Naive thymus-derived CD4-positive, alpha-beta T cell (primary cell): ENCODE measurements at regions of chr4 and their contacts with region 1.

Region 1: GRCh38 chr4:37891260-37892159 is 626 bp downstream of the TBC1D1 start:
- DNase-seq: peak; percentile 37 to 70 (median 58)
- ATAC-seq: peak; percentile 68
- H3K4me3 ChIP-seq: peak overlapping the region; percentile 51
- H3K4me3 Mint-ChIP-seq: peak overlapping the region; percentile 88 to 100 (median 96)
- H3K27ac ChIP-seq: peak overlapping the region; percentile 69
- H3K27ac Mint-ChIP-seq: peak overlapping the region; percentile 86 to 97 (median 92)
- H3K4me1 ChIP-seq: peaks cover 10 to 25% of the 10 kb centered on the region in 2 donors
- H3K4me1 Mint-ChIP-seq: peaks cover 28 to 66% (median 55%) of the 10 kb centered on the region in 7 donors
- H3K27me3 ChIP-seq: no peaks in the 10 kb centered on the region
- H3K27me3 Mint-ChIP-seq: peaks cover 0 to 5% (median 0%) of the 10 kb centered on the region in 5 donors

Region 2: DNA sequence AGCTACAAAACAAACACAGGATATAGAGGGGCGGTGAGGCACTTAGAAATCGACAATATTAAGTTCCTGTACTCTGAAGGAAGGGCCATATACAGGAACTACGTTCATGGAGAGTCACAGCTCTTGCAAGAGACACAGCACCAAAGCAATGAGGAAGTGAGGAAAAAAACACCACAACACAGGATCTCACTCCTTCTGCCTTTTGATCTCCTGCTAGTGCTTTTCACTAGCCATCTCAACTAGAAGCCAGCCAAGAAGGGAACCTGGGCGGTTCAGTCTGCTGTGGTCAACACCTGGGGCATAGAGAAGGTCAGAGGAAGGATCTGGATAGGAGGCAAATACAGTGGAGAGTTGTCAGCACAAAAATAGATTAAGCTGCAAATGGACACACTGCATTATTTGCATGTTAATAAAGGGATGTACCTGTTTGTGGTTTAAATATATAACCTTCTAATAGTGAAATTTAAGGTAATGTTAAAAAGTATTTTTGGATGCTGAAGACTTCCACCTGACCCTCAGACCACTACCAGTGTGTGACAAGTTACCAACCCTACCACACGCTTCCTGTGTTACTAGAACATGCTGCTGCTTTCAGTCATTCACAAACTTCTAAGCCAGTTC is 1505.4 kb before region 1 on chr4:
- CTCF ChIA-PET with region 1: no interaction called
- POLR2A ChIA-PET with region 1: no interaction called
- intact Hi-C with region 1: loop called in 1 of 2 experiments (anchors 5 kb)
- DNase-seq: peak; percentile 8 to 89 (median 82)
- ATAC-seq: peak; percentile 99
- H3K4me3 ChIP-seq: peak overlapping the region; percentile 29
- H3K4me3 Mint-ChIP-seq: peak overlapping the region; percentile 46 to 84 (median 70)
- H3K27ac ChIP-seq: peak overlapping the region; percentile 70
- H3K27ac Mint-ChIP-seq: peak overlapping the region; percentile 92 to 99 (median 94)
- H3K4me1 ChIP-seq: peaks cover 22% of the 10 kb centered on the region in 2 donors
- H3K4me1 Mint-ChIP-seq: peaks cover 19 to 51% (median 40%) of the 10 kb centered on the region in 7 donors
- H3K27me3 ChIP-seq: no peaks in the 10 kb centered on the region
- H3K27me3 Mint-ChIP-seq: peaks cover 0 to 11% (median 0%) of the 10 kb centered on the region in 5 donors

Region 3: DNA sequence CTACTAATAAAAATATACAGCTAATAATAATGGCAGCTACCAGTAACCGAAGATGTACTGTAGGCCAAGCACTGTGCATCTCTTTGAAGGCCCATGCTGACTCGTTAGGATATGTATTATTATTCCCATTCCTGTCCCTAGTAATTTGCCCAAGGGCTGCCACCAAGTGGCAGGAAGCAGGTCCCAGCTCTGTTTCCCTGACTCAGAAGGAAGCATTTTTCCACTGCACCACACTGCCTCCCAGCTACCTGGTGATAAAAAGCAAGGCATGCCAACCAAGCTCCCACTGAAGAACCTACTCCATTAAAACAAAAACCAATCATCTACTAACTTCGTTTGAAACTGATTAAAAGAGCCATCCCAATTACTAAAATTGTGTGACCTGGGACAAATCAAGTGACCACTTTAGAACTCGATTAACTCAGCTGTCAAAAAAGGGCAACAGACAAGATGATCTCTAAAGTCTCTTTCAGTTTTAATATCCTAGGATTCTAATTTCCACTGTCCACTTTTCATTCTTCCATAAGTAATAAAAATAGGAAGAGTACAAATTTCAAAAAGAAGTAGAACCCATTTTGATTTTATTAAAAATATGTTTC is 89.3 kb before region 1 on chr4:
- CTCF ChIA-PET with region 1: interaction called, 3 read pairs
- POLR2A ChIA-PET with region 1: no interaction called
- intact Hi-C with region 1: loop called in 1 of 2 experiments (anchors 1 kb)
- DNase-seq: no peak
- ATAC-seq: no peak
- H3K4me3 ChIP-seq: no peak overlapping the region
- H3K4me3 Mint-ChIP-seq: no peak overlapping the region
- H3K27ac ChIP-seq: no peak overlapping the region
- H3K27ac Mint-ChIP-seq: no peak overlapping the region
- H3K4me1 ChIP-seq: no peaks in the 10 kb centered on the region
- H3K4me1 Mint-ChIP-seq: peaks cover 0 to 2% (median 0%) of the 10 kb centered on the region in 7 donors
- H3K27me3 ChIP-seq: no peaks in the 10 kb centered on the region
- H3K27me3 Mint-ChIP-seq: peaks cover 0 to 20% (median 0%) of the 10 kb centered on the region in 5 donors

Region 4: DNA sequence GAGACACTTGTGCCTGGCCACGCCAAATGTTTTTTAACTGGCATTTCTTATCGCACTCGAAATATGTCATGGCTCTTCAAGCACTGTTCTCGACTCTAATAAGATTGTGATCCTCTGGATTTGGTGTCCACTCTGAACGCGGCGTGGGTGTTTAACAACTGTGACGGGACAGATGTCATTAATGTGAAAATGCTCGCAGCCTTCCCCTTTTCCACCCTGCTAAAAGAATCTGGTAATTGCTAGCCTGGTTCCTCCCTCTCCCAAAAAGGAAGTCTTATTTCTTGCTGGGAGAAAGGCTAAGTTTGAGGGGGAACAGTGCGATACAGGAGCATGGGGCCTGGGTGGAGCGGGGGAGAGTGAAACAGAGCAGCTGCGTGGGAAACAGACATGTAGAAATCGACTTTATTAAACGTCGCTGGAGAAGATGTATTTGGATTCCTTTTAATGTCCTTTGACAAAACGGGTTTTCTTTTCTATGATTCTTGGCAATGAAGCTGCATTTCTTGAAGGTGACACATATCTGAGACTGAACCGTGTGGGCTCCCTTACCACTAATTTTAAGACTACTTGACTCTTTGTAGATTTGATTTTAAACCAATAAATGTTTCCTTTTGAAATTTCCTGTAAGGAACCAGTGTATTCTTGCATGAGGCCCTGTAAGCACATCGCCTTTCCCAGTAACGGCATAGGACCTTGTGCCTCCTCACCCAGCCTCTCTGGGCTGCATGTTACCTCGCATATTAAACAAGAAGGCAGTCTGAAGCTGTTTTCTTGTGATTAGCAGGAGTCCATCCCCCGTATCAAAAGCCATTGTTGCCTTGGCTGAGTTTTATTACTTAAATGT is 17.2 kb after region 1 on chr4:
- CTCF ChIA-PET with region 1: no interaction called
- POLR2A ChIA-PET with region 1: interaction called, 3 read pairs
- intact Hi-C with region 1: loop called in 1 of 2 experiments (anchors 1 kb)
- DNase-seq: no peak
- ATAC-seq: no peak
- H3K4me3 ChIP-seq: no peak overlapping the region
- H3K4me3 Mint-ChIP-seq: no peak overlapping the region
- H3K27ac ChIP-seq: no peak overlapping the region
- H3K27ac Mint-ChIP-seq: no peak overlapping the region
- H3K4me1 ChIP-seq: peaks cover 0 to 5% of the 10 kb centered on the region in 2 donors
- H3K4me1 Mint-ChIP-seq: peaks cover 6 to 80% (median 53%) of the 10 kb centered on the region in 7 donors
- H3K27me3 ChIP-seq: no peaks in the 10 kb centered on the region
- H3K27me3 Mint-ChIP-seq: no peaks in the 10 kb centered on the region

Region 5: DNA sequence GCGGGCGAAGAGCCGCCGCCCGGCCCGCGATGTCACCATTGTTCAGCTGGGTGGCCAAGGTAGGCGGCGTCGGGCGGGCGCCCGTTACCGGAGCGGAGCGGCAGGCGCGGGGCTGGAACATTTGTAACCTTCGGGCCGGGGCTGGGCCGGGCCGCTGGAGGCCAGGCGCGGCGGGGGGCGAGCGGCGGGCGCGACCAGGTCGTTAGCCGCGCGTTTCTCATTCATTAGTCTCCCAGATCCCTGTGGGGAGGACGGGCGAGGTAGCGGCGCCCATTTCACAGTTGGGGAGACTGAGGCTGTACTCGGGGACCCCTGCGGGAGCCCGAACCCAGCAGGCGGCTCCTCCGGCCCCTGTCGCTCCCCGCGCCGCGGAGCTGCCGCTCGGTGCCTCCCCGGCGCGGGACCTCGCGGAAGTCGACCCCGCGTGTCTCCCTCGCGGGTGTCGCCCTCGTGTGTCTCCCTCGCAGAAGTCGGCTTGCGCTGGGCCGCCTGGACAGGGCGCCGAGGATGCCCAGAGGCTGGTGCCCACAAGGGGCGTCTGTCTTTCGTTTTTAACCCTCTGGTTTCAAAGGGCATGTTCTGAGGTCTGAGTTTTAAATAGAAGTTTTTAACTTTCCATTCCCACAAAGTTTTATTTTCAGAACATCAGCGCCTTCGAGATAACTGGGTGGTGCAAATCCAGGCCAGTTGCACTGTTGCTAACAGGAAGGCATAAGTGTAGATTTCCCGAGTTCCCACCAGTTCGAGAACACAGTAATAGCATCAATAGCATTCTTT is 86.1 kb after region 1 on chr4:
- CTCF ChIA-PET with region 1: interaction called, 4 read pairs
- POLR2A ChIA-PET with region 1: interaction called, 4 read pairs
- intact Hi-C with region 1: loop called (anchors 1 kb)
- DNase-seq: peak; percentile 56 to 75 (median 70)
- ATAC-seq: peak; percentile 87
- H3K4me3 ChIP-seq: peak overlapping the region; percentile 69
- H3K4me3 Mint-ChIP-seq: peak overlapping the region; percentile 74 to 91 (median 84)
- H3K27ac ChIP-seq: peak overlapping the region; percentile 85
- H3K27ac Mint-ChIP-seq: peak overlapping the region; percentile 51 to 90 (median 78)
- H3K4me1 ChIP-seq: peaks cover 9 to 13% of the 10 kb centered on the region in 2 donors
- H3K4me1 Mint-ChIP-seq: peaks cover 14 to 40% (median 34%) of the 10 kb centered on the region in 7 donors
- H3K27me3 ChIP-seq: no peaks in the 10 kb centered on the region
- H3K27me3 Mint-ChIP-seq: no peaks in the 10 kb centered on the region

Region 6: DNA sequence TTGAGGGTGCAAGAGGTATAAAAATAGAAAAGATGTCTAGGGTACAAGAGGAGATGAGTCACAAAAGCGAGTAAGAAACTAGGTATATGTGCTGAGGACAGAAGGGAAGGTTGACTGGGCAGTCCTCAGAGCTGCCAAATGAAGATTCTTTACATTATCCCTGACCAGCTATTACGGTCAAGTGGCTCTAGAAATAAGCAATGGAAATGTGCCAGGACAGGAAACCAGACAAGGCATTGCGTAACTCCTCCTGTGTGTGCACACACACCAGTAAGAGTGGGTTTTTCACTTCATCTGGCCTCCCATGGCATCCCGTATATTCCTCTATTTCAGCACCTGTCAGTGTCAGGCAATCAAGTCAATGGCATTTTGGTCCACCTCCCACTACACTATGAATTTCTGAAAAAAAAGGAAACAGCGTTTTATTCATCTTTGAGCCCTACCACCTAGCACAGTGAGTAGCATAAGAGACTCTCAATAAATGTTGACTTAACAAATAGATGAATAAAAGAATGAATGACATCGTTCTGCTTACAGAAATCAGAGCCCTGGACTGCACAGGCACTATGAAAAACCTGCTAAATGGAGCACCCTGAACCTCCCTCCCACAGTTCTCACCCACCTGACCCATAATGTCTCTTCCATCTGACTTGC is 709.9 kb after region 1 on chr4:
- CTCF ChIA-PET with region 1: no interaction called
- POLR2A ChIA-PET with region 1: no interaction called
- intact Hi-C with region 1: no loop called
- DNase-seq: no peak
- ATAC-seq: no peak
- H3K4me3 ChIP-seq: no peak overlapping the region
- H3K4me3 Mint-ChIP-seq: no peak overlapping the region
- H3K27ac ChIP-seq: no peak overlapping the region
- H3K27ac Mint-ChIP-seq: peak overlapping the region in 4 of 9 donors; percentile 18 to 27 (median 20)
- H3K4me1 ChIP-seq: peaks cover 5% of the 10 kb centered on the region in 2 donors
- H3K4me1 Mint-ChIP-seq: peaks cover 16 to 40% (median 24%) of the 10 kb centered on the region in 7 donors
- H3K27me3 ChIP-seq: no peaks in the 10 kb centered on the region
- H3K27me3 Mint-ChIP-seq: peaks cover 0 to 10% (median 0%) of the 10 kb centered on the region in 5 donors

Region 7: GRCh38 chr4:38856524-38857337 is 965.2 kb after region 1 on chr4 and contains the start of gene TLR6:
- CTCF ChIA-PET with region 1: no interaction called
- POLR2A ChIA-PET with region 1: no interaction called
- intact Hi-C with region 1: loop called in 1 of 2 experiments (anchors 1 kb)
- DNase-seq: peak in 8 of 9 donors; percentile 37 to 90 (median 83)
- ATAC-seq: peak; percentile 83
- H3K4me3 ChIP-seq: peak within 1 kb of the TSS; percentile 14
- H3K4me3 Mint-ChIP-seq: peak within 1 kb of the TSS in 9 of 10 donors; percentile 62 to 81 (median 67)
- H3K27ac ChIP-seq: peak within 1 kb of the TSS; percentile 49
- H3K27ac Mint-ChIP-seq: peak within 1 kb of the TSS; percentile 76 to 93 (median 90)
- H3K4me1 ChIP-seq: peaks cover 0 to 26% of the 10 kb centered on the region in 2 donors
- H3K4me1 Mint-ChIP-seq: peaks cover 28 to 52% (median 46%) of the 10 kb centered on the region in 7 donors
- H3K27me3 ChIP-seq: no peaks in the 10 kb centered on the region
- H3K27me3 Mint-ChIP-seq: peaks cover 0 to 6% (median 0%) of the 10 kb centered on the region in 5 donors
- total RNA-seq, gene TLR6: 1.00 to 8.8 (median 1.9) TPM